Common myeloid progenitor, CD34-positive (primary cell): ENCODE measurements at regions of chr4 and their contacts with region 1.

Region 1: GRCh38 chr4:94332983-94333590 is 9.5 kb downstream of the HPGDS start:
- DNase-seq: peak in 2 of 3 donors; percentile 51 to 55
- H3K4me3 ChIP-seq: peak overlapping the region in 3 of 7 experiments; percentile 4 to 57 (median 22)
- H3K27ac ChIP-seq: no peak overlapping the region
- H3K4me1 ChIP-seq: peaks cover 0 to 9% (median under 1%) of the 10 kb centered on the region in 4 experiments
- H3K27me3 ChIP-seq: no peaks in the 10 kb centered on the region

Region 2: GRCh38 chr4:94202769-94203168 is 130.3 kb before region 1 on chr4:
- CTCF ChIA-PET with region 1: no interaction called
- POLR2A ChIA-PET with region 1: no interaction called
- DNase-seq: no peak
- H3K4me3 ChIP-seq: no peak overlapping the region
- H3K27ac ChIP-seq: no peak overlapping the region
- H3K4me1 ChIP-seq: peaks cover 0 to 1% (median 0%) of the 10 kb centered on the region in 4 experiments
- H3K27me3 ChIP-seq: no peaks in the 10 kb centered on the region

Region 3: GRCh38 chr4:94390804-94391410 is 57.8 kb after region 1 on chr4:
- CTCF ChIA-PET with region 1: interaction called, 33 read pairs
- POLR2A ChIA-PET with region 1: no interaction called
- DNase-seq: peak; percentile 32 to 59 (median 48)
- H3K4me3 ChIP-seq: no peak overlapping the region
- H3K27ac ChIP-seq: no peak overlapping the region
- H3K4me1 ChIP-seq: no peaks in the 10 kb centered on the region
- H3K27me3 ChIP-seq: no peaks in the 10 kb centered on the region

Region 4: DNA sequence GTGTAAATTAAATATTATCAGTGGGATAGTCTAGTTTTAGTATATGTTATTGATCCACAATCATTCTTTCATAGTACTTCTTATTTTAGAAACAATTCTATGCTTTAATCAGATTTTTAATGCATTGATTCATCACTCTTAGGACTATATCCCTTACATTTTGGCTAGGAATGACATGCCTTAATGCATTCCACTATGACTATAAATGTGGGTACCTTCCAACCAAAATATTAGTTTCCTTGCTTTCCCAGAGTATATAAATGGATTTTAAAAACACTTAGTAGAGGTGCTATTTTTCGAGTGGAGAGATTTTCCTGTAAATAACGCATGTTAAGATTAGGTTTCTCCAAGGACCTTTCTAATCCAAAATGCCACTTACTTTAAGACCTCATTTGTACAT is 111.7 kb after region 1 on chr4:
- CTCF ChIA-PET with region 1: no interaction called
- POLR2A ChIA-PET with region 1: no interaction called
- DNase-seq: no peak
- H3K4me3 ChIP-seq: no peak overlapping the region
- H3K27ac ChIP-seq: no peak overlapping the region
- H3K4me1 ChIP-seq: peaks cover 0 to 3% (median under 1%) of the 10 kb centered on the region in 4 experiments
- H3K27me3 ChIP-seq: no peaks in the 10 kb centered on the region

Region 5: DNA sequence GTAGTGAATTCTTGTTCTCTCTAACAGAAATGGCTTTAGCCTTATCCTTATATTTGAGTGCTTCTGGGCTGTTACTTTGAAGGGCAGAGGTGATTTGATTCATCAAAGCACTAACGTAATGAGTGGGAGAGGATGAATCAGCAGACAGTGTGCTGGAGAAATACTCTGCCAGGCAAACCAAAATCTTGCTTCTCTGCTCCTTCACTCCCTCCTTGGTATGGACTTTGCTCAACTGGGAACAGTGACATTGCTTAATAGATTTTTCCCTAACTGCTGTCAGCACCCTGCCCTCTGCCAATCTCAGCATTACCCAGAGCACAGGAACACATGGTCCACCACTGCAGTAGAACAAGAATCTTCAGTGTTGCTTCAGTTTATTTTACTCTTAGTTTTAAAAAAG is 174.6 kb after region 1 on chr4:
- CTCF ChIA-PET with region 1: no interaction called
- POLR2A ChIA-PET with region 1: no interaction called
- DNase-seq: no peak
- H3K4me3 ChIP-seq: no peak overlapping the region
- H3K27ac ChIP-seq: no peak overlapping the region
- H3K4me1 ChIP-seq: peaks cover 0 to 4% (median 0%) of the 10 kb centered on the region in 4 experiments
- H3K27me3 ChIP-seq: no peaks in the 10 kb centered on the region